K562 (cell line): ENCODE measurements at regions of chr15 and their contacts with region 1.

Region 1: DNA sequence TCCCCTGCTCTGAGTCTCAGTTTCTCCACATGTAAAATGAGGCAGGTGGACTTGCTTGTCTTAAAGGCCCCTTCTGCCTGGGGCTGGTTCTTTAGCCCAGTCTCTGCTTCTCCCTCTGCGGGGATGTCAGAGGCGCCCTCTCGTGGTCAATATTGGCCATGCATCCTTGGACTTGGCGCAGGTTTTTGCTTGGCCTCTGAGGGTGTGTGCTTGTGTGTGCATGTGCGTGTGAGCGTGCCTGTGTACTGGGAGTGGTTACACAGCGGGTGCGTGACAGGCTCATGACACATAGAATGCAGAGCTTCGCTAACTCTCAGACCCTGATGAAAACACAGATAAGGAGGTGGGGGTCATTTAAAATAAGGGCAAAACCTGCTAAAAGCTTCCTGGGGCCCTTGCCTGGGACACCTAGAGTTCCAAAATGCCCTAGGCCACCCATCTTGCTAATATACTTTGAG is 160.9 kb downstream of the SMAD6 start:
- DNase-seq: peak; percentile 82 to 88 (median 82)
- ATAC-seq: peak; percentile 98
- H3K4me3 ChIP-seq: no peak overlapping the region
- H3K27ac ChIP-seq: no peak overlapping the region
- H3K4me1 ChIP-seq: peaks cover 0 to 13% of the 10 kb centered on the region in 2 experiments; a peak in 3 of 5 replicates
- H3K27me3 ChIP-seq: no peaks in the 10 kb centered on the region
- CTCF ChIP-seq: peak; percentile 92 to 98 (median 96)
- EP300 ChIP-seq: no peak
- POLR2A ChIP-seq: no peak
- RAD21 ChIP-seq: peak; percentile 59 to 81

Region 2: GRCh38 chr15:66566963-66567531 is 295.9 kb before region 1 on chr15:
- CTCF ChIA-PET with region 1: no interaction called
- POLR2A ChIA-PET with region 1: no interaction called
- in situ Hi-C with region 1: no loop called
- intact Hi-C with region 1: no loop called
- DNase-seq: peak; percentile 82 to 88 (median 82)
- ATAC-seq: peak; percentile 91
- H3K4me3 ChIP-seq: no peak overlapping the region
- H3K27ac ChIP-seq: no peak overlapping the region; the same call in 1 of the 3 replicates
- H3K4me1 ChIP-seq: peaks cover 5 to 24% of the 10 kb centered on the region in 2 experiments; a peak in 3 of 5 replicates
- H3K27me3 ChIP-seq: no peaks in the 10 kb centered on the region
- CTCF ChIP-seq: peak; percentile 74 to 87 (median 74)
- EP300 ChIP-seq: no peak
- POLR2A ChIP-seq: no peak
- RAD21 ChIP-seq: peak in 1 of 2 experiments; percentile 49; a peak in 2 of 4 replicates

Region 3: GRCh38 chr15:66901336-66902100 is 38.6 kb after region 1 on chr15:
- CTCF ChIA-PET with region 1: interaction called, 7 read pairs
- POLR2A ChIA-PET with region 1: interaction called, 4 read pairs
- in situ Hi-C with region 1: no loop called
- intact Hi-C with region 1: loop called (anchors 5 kb)
- DNase-seq: no peak
- ATAC-seq: no peak
- H3K4me3 ChIP-seq: no peak overlapping the region
- H3K27ac ChIP-seq: no peak overlapping the region
- H3K4me1 ChIP-seq: peaks cover 0 to 12% of the 10 kb centered on the region in 2 experiments; a peak in 3 of 5 replicates
- H3K27me3 ChIP-seq: no peaks in the 10 kb centered on the region
- CTCF ChIP-seq: no peak
- EP300 ChIP-seq: no peak
- POLR2A ChIP-seq: no peak
- RAD21 ChIP-seq: no peak